A673 (cell line): ENCODE measurements at regions of chr6 and their contacts with region 1.

Region 1: DNA sequence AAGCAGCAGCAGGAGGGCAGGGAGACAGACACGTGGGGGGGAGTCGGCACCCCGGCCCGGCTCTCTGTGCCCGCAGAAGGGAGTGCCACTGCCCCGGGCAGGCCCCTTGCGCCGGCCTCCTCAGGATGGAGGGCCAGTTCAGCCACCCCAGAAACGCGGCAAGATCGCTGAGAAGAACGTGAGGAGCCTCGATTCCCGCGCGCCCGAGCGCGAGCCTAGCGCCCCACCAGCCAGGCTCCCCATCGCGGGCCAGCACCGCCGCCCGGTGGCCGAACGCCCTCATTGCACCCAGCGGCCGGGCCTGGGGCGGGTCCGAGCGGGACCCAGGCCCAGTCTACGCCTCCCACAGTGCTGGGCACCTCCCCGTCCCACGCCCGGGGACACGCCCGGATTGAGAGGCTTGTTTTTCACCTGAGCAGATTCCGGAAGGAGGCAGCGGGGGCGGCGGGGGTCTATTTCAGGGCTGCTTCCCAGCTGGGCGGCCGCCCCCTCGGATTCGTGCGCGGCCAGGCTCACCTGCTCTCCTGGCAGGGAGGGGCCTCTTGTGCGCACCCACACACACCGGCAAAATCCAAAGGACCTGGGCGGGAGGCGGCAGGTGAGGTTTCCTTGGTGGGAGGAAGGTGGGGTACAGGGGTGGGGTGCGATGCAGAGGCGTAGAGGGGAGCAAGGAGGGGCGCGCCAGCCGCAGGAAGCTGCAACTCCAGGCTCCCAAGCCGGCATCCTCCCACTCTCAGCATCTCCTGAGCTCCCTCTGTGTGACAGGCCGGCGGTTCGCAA is 9.0 kb upstream of the GRM4 start:
- DNase-seq: peak; percentile 77
- H3K4me3 ChIP-seq: peak overlapping the region; percentile 24
- H3K27ac ChIP-seq: no peak overlapping the region
- H3K4me1 ChIP-seq: peaks cover 6% of the 10 kb centered on the region
- H3K27me3 ChIP-seq: peaks cover 5% of the 10 kb centered on the region
- CTCF ChIP-seq: peak; percentile 90

Region 2: GRCh38 chr6:33711140-33712129 is 443.4 kb before region 1 on chr6 and contains the start of gene UQCC2:
- CTCF ChIA-PET with region 1: interaction called, 3 read pairs
- POLR2A ChIA-PET with region 1: no interaction called
- intact Hi-C with region 1: loop called (anchors 10 kb)
- DNase-seq: peak; percentile 98
- H3K4me3 ChIP-seq: peak within 1 kb of the TSS; percentile 64
- H3K27ac ChIP-seq: peak within 1 kb of the TSS; percentile 98
- H3K4me1 ChIP-seq: peaks cover 26% of the 10 kb centered on the region
- H3K27me3 ChIP-seq: no peaks in the 10 kb centered on the region
- CTCF ChIP-seq: peak; percentile 82
- total RNA-seq, gene UQCC2: 122 and 124 TPM in 2 replicates

Region 3: GRCh38 chr6:33744001-33744848 is 410.6 kb before region 1 on chr6:
- CTCF ChIA-PET with region 1: interaction called, 11 read pairs
- POLR2A ChIA-PET with region 1: no interaction called
- intact Hi-C with region 1: loop called (anchors 1 kb)
- DNase-seq: peak; percentile 85
- H3K4me3 ChIP-seq: no peak overlapping the region
- H3K27ac ChIP-seq: no peak overlapping the region
- H3K4me1 ChIP-seq: peaks cover 22% of the 10 kb centered on the region
- H3K27me3 ChIP-seq: no peaks in the 10 kb centered on the region
- CTCF ChIP-seq: peak; percentile 97

Region 4: DNA sequence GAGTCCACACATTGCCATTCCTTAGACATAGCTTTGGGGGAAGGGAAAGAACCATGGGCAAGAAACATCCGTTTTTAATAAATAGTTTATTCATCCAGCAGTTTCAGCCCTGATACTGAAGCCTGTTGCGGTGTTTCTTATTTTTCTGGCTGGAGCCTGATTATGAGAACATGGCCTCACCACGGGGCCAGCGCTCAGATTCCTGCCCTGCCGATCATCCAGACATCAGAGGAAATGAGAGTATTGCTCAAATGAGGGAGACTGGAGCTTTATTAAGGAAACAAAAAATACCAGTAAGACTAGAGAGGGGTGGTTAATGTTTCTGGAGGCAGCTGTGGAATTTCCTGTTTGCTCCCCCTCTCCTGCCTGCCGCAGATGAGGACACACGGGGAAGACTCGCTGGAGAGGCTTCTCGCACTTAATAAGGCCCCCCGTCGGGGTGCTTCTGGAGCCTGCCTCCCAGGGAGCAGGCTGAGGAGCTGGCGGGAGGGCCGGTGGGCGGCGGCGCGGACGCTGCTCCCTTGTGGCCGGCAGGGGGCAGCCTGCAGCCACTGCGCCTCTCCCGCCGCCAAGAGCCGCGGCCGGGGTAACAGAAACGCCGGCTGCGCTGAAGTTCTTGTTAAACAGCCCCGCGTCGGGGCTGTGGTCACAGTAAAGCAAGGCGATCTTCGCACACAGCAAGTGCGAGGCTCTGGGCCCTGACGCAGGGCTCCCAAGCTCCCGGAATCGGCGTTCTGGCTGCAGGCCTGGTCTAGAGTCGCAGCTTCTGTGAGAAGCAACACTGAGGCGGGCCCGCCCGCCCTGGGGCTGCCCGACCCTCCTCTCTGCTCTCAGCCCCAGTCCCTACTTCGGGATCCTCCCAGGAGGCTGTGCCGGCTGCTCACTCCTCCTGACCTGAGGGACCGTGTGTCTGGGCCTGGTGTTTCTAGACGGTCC is 383.4 kb before region 1 on chr6:
- CTCF ChIA-PET with region 1: interaction called, 3 read pairs
- POLR2A ChIA-PET with region 1: no interaction called
- intact Hi-C with region 1: loop called (anchors 2 kb)
- DNase-seq: peak; percentile 100
- H3K4me3 ChIP-seq: no peak overlapping the region
- H3K27ac ChIP-seq: peak overlapping the region; percentile 97
- H3K4me1 ChIP-seq: peaks cover 53% of the 10 kb centered on the region
- H3K27me3 ChIP-seq: no peaks in the 10 kb centered on the region
- CTCF ChIP-seq: peak; percentile 99

Region 5: GRCh38 chr6:34236131-34236996 is 81.5 kb after region 1 on chr6 and contains the start of gene HMGA1:
- CTCF ChIA-PET with region 1: no interaction called
- POLR2A ChIA-PET with region 1: no interaction called
- intact Hi-C with region 1: no loop called
- DNase-seq: peak; percentile 94
- H3K4me3 ChIP-seq: peak within 1 kb of the TSS; percentile 58
- H3K27ac ChIP-seq: peak within 1 kb of the TSS; percentile 82
- H3K4me1 ChIP-seq: peaks cover 20% of the 10 kb centered on the region
- H3K27me3 ChIP-seq: no peaks in the 10 kb centered on the region
- CTCF ChIP-seq: no peak
- total RNA-seq, gene HMGA1: 248 and 290 TPM in 2 replicates